RWPE1 (cell line): ENCODE measurements at regions of chr7 and their contacts with region 1.

Region 1: DNA sequence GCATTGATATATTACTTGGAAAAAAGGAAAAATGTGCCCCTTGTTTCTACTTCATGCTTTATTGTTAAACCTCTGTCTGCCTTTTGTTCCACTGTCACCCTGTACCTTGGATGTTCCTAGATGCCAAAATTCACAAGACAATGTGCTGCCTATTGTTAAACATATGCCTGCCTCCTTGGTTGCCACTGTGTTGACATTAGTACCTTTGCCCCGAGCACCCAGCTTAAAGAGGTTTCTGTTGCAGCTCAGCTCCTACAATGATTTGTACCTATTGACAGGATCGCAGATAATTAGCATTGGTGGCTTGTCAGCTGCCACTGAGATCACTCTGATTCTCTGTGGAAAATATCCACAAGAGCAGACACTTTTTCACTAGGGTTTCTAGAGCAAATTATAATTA is 188.0 kb downstream of the KCND2 start:
- DNase-seq: no peak
- H3K27ac ChIP-seq: no peak overlapping the region
- CTCF ChIP-seq: no peak

Region 2: GRCh38 chr7:120412139-120413050 is 48.6 kb before region 1 on chr7:
- CTCF ChIA-PET with region 1: interaction called, 10 read pairs
- POLR2A ChIA-PET with region 1: no interaction called
- DNase-seq: no peak
- H3K27ac ChIP-seq: no peak overlapping the region
- CTCF ChIP-seq: no peak